Naive thymus-derived CD4-positive, alpha-beta T cell (primary cell): ENCODE measurements at regions of chr3 and their contacts with region 1.

Region 1: GRCh38 chr3:110314512-110315114 is 757.0 kb upstream of the NECTIN3 start:
- DNase-seq: peak in 8 of 9 donors; percentile 25 to 66 (median 56)
- ATAC-seq: peak; percentile 76
- H3K4me3 ChIP-seq: no peak overlapping the region
- H3K4me3 Mint-ChIP-seq: peak overlapping the region in 1 of 10 donors; percentile 11
- H3K27ac ChIP-seq: no peak overlapping the region
- H3K27ac Mint-ChIP-seq: no peak overlapping the region
- H3K4me1 ChIP-seq: no peaks in the 10 kb centered on the region
- H3K4me1 Mint-ChIP-seq: peaks cover 0 to 5% (median 0%) of the 10 kb centered on the region in 7 donors
- H3K27me3 ChIP-seq: no peaks in the 10 kb centered on the region
- H3K27me3 Mint-ChIP-seq: peaks cover 0 to 6% (median 0%) of the 10 kb centered on the region in 5 donors

Region 2: GRCh38 chr3:108662130-108662738 is 1652.4 kb before region 1 on chr3:
- CTCF ChIA-PET with region 1: no interaction called
- POLR2A ChIA-PET with region 1: no interaction called
- intact Hi-C with region 1: loop called in 1 of 2 experiments (anchors 2 kb)
- DNase-seq: peak in 7 of 9 donors; percentile 53 to 79 (median 74)
- ATAC-seq: peak; percentile 95
- H3K4me3 ChIP-seq: no peak overlapping the region
- H3K4me3 Mint-ChIP-seq: peak overlapping the region in 6 of 10 donors; percentile 0 to 43 (median 15)
- H3K27ac ChIP-seq: no peak overlapping the region
- H3K27ac Mint-ChIP-seq: peak overlapping the region in 2 of 9 donors; percentile 6 to 22
- H3K4me1 ChIP-seq: no peaks in the 10 kb centered on the region
- H3K4me1 Mint-ChIP-seq: peaks cover 0 to 20% (median 17%) of the 10 kb centered on the region in 7 donors
- H3K27me3 ChIP-seq: no peaks in the 10 kb centered on the region
- H3K27me3 Mint-ChIP-seq: peaks cover 0 to 5% (median 0%) of the 10 kb centered on the region in 5 donors

Region 3: DNA sequence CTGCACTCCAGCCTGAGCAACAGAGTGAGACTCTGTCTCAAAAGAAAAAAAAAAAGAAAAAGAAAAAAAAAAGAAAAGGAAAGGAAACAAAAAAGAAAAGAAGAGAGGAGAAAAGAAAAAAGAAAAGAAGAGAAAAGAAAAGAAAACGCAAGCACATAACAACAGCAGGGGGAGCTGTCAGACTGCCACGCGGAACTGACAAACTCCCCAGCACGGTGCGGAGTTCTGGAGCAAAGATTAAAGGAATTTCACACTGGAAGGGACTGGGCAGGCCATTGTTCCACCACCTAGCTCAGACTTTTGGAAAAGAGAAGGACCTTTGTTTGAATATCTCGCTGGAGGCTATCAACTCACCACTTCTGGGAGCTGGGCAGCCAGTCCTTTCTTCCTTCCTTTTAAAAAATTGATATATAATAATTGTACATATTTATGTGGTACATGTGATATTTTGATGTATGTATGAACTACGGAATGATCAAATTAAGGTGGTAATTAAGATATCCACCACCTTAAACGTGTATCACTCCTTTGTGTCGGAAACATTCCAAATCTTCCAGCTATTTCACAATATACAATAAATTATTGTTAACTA is 1038.8 kb before region 1 on chr3:
- CTCF ChIA-PET with region 1: no interaction called
- POLR2A ChIA-PET with region 1: no interaction called
- intact Hi-C with region 1: loop called in 1 of 2 experiments (anchors 1 kb)
- DNase-seq: no peak
- ATAC-seq: no peak
- H3K4me3 ChIP-seq: no peak overlapping the region
- H3K4me3 Mint-ChIP-seq: no peak overlapping the region
- H3K27ac ChIP-seq: no peak overlapping the region
- H3K27ac Mint-ChIP-seq: no peak overlapping the region
- H3K4me1 ChIP-seq: no peaks in the 10 kb centered on the region
- H3K4me1 Mint-ChIP-seq: peaks cover 0 to 3% (median 0%) of the 10 kb centered on the region in 7 donors
- H3K27me3 ChIP-seq: no peaks in the 10 kb centered on the region
- H3K27me3 Mint-ChIP-seq: peaks cover 0 to 15% (median 6%) of the 10 kb centered on the region in 5 donors

Region 4: DNA sequence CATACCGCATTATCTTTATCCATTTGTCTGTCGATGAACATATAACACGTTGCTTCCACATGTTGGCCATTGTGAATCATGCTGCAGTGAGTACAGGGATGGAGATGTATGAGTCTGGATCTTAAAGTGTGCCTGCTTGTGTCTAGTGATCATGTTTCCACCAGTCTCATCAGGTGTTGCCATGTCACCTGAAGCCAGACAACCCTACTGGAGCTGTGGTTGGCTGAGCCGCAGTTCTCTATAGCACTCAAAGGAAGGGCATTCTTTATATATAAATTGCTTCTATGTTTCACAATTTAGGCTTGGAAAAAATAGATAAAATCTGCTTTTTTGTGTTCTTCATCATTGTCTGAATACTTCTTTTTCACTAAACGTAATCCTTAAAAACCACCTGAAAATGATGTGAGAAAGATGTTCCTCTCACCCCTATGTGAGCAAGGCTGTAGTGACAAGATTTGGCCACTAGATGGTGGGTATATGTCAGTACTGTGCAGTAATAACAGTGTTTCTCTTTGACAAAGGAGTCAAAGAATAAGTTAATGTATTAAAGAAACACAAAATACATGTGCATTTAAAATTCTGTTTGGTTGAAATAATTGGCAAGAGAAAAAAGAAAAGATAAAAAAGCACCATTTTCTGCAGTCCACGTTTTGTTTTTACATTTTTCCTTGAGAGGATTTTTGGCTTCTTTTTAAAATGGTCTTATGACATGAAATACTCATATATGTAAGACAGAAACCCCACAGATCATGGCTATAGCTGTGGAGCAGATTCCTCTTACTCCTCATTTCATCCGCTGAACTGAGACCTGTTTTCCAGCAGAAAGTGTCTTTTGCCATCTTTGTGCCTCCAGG is 582.8 kb before region 1 on chr3:
- CTCF ChIA-PET with region 1: interaction called, 11 read pairs
- POLR2A ChIA-PET with region 1: no interaction called
- intact Hi-C with region 1: loop called (anchors 1 kb)
- DNase-seq: peak; percentile 11 to 68 (median 55)
- ATAC-seq: peak; percentile 87
- H3K4me3 ChIP-seq: no peak overlapping the region
- H3K4me3 Mint-ChIP-seq: no peak overlapping the region
- H3K27ac ChIP-seq: no peak overlapping the region
- H3K27ac Mint-ChIP-seq: no peak overlapping the region
- H3K4me1 ChIP-seq: no peaks in the 10 kb centered on the region
- H3K4me1 Mint-ChIP-seq: peaks cover 0 to 12% (median 4%) of the 10 kb centered on the region in 7 donors
- H3K27me3 ChIP-seq: no peaks in the 10 kb centered on the region
- H3K27me3 Mint-ChIP-seq: no peaks in the 10 kb centered on the region

Region 5: DNA sequence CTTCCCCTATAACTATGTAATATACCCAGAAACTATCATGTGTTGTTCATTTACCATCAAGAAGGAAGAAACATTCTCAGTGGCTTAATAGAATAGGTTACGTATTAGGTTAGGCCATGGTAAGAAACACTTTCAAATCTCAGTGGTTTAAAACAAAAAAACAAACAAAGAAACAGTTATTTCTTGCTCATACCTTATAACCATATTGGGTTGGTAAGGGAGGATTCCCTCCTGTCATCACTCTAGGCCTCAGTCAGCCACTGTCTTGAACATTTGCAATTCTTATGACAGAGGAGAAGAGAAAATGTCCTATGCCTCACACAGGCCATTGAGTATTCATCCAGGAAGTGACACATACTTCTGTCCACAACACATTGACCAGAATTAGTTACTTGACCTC is 29.3 kb after region 1 on chr3:
- CTCF ChIA-PET with region 1: no interaction called
- POLR2A ChIA-PET with region 1: no interaction called
- intact Hi-C with region 1: no loop called
- DNase-seq: no peak
- ATAC-seq: no peak
- H3K4me3 ChIP-seq: no peak overlapping the region
- H3K4me3 Mint-ChIP-seq: no peak overlapping the region
- H3K27ac ChIP-seq: no peak overlapping the region
- H3K27ac Mint-ChIP-seq: no peak overlapping the region
- H3K4me1 ChIP-seq: no peaks in the 10 kb centered on the region
- H3K4me1 Mint-ChIP-seq: peaks cover 0 to 7% (median 0%) of the 10 kb centered on the region in 7 donors
- H3K27me3 ChIP-seq: no peaks in the 10 kb centered on the region
- H3K27me3 Mint-ChIP-seq: peaks cover 0 to 6% (median 0%) of the 10 kb centered on the region in 5 donors

Region 6: GRCh38 chr3:111338059-111338698 is 1023.6 kb after region 1 on chr3:
- CTCF ChIA-PET with region 1: no interaction called
- POLR2A ChIA-PET with region 1: no interaction called
- intact Hi-C with region 1: loop called in 1 of 2 experiments (anchors 1 kb)
- DNase-seq: peak in 5 of 9 donors; percentile 22 to 43 (median 23)
- ATAC-seq: no peak
- H3K4me3 ChIP-seq: no peak overlapping the region
- H3K4me3 Mint-ChIP-seq: no peak overlapping the region
- H3K27ac ChIP-seq: no peak overlapping the region
- H3K27ac Mint-ChIP-seq: peak overlapping the region in 2 of 9 donors; percentile 3 to 4
- H3K4me1 ChIP-seq: no peaks in the 10 kb centered on the region
- H3K4me1 Mint-ChIP-seq: peaks cover 2 to 31% (median 12%) of the 10 kb centered on the region in 7 donors
- H3K27me3 ChIP-seq: no peaks in the 10 kb centered on the region
- H3K27me3 Mint-ChIP-seq: no peaks in the 10 kb centered on the region